Ovary (tissue), 10 donors: ENCODE measurements at regions of chr21 and their contacts with region 1.

Region 1: DNA sequence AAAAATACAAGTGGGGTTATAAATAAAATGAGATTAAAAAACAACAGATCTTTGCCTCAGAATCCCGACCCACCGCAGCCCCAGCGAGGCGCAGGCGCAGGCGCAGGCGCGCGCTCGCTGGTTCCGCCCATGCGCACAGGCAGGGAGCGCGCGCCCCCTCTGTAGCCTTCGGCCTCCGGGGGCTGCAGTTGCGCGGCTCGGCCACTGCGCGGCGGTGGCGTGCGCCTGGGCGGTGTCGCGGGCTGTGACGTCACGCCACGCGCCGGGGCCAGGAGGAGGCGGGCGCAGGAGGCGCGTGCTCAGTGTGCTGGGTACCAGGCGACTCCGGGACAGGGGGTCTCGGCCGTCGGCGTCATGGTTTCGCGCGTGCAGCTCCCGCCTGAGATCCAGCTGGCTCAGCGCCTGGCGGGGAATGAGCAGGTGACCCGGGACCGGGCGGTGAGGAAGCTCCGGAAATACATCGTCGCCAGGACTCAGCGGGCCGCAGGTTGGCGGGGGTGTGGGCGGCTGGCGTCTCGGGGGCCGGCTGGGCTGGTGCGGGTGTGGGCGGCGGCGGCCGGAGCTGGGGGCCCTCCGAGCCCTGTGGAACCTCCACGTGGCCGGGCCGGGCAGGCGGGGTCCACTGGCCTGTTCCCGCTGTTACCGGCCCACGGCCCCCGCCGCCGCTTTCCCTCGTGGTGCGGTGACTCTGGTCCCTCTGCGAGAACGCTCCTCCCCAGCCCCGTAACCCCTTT is at the start of gene RRP1:
- DNase-seq: peak; percentile 89 to 97 (median 94)
- H3K4me3 ChIP-seq: peak within 1 kb of the TSS; percentile 94
- H3K27ac ChIP-seq: peak within 1 kb of the TSS; percentile 9 to 61
- H3K4me1 ChIP-seq: peaks cover 5% of the 10 kb centered on the region
- H3K27me3 ChIP-seq: no peaks in the 10 kb centered on the region
- CTCF ChIP-seq: peak; percentile 100
- EP300 ChIP-seq: no peak
- POLR2A ChIP-seq: peak; percentile 73
- total RNA-seq, gene RRP1: 8.5 to 29.3 (median 25.2) TPM

Region 2: GRCh38 chr21:43687566-43688286 is 101.7 kb before region 1 on chr21:
- intact Hi-C with region 1: no loop called
- DNase-seq: no peak
- H3K4me3 ChIP-seq: no peak overlapping the region
- H3K27ac ChIP-seq: no peak overlapping the region
- H3K4me1 ChIP-seq: no peaks in the 10 kb centered on the region
- H3K27me3 ChIP-seq: no peaks in the 10 kb centered on the region
- CTCF ChIP-seq: no peak
- EP300 ChIP-seq: no peak
- POLR2A ChIP-seq: no peak

Region 3: GRCh38 chr21:43866260-43866629 is 76.8 kb after region 1 on chr21:
- intact Hi-C with region 1: loop called in 1 of 4 experiments (anchors 10 kb)
- DNase-seq: peak; percentile 52 to 77 (median 60)
- H3K4me3 ChIP-seq: peak overlapping the region; percentile 93
- H3K27ac ChIP-seq: peak overlapping the region; percentile 89 to 93
- H3K4me1 ChIP-seq: peaks cover 9% of the 10 kb centered on the region
- H3K27me3 ChIP-seq: no peaks in the 10 kb centered on the region
- CTCF ChIP-seq: no peak
- EP300 ChIP-seq: no peak
- POLR2A ChIP-seq: no peak

Region 4: GRCh38 chr21:43975495-43975993 is 186.1 kb after region 1 on chr21:
- intact Hi-C with region 1: loop called in 1 of 4 experiments (anchors 5 kb)
- DNase-seq: peak; percentile 76 to 91 (median 86)
- H3K4me3 ChIP-seq: no peak overlapping the region
- H3K27ac ChIP-seq: no peak overlapping the region
- H3K4me1 ChIP-seq: peaks cover 9% of the 10 kb centered on the region
- H3K27me3 ChIP-seq: no peaks in the 10 kb centered on the region
- CTCF ChIP-seq: peak; percentile 72 to 85 (median 84)
- EP300 ChIP-seq: no peak
- POLR2A ChIP-seq: no peak